Adrenal gland (tissue), 19 donors: ENCODE measurements at regions of chr22 and their contacts with region 1.

Region 1: GRCh38 chr22:29216873-29217666 is 11.4 kb downstream of the EMID1 start:
- DNase-seq: peak; percentile 74 to 97 (median 95)
- H3K4me3 ChIP-seq: no peak overlapping the region
- H3K27ac ChIP-seq: peak overlapping the region; percentile 33 to 90 (median 66)
- H3K4me1 ChIP-seq: peaks cover 13 to 22% of the 10 kb centered on the region in 2 donors
- H3K27me3 ChIP-seq: no peaks in the 10 kb centered on the region
- CTCF ChIP-seq: peak in 1 of 6 experiments; percentile 11
- POLR2A ChIP-seq: no peak

Region 2: DNA sequence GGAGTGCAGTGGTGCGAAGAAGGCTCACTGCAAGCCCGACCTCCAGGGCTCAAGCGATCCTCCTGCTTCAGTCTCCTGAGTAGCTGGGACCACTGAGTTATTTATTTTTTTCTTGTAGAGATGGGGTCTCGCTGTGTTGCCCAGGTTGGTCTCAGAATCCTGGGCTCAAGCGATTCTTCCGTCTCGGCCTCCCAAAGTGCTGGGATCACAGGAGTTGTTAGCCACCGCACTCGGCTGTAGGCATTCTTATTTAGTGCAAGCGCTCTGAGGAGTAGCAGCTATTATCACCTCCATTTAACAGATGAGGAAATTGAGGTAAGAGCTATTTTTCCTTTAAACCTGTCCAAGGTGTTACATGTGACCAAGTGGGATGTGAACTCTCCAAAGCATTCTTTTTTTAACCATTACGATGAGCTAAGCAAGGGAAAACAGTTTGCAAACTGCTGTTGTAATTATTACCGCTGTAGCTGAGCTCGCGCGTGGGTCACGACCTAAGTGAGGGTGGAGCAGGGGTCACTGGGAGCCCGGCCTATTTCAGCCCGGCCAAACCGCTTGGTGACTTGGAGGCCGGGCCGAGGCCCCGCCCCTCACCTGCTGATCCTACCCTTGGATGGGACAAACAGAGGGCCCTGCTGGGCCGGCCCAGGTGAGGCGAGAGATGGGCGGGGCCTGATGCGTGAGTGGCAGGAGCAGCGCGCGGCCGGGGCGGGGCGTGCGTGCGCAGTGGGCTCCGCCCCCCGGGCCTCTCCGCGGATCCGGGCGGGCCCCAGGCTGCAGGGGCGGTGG is 144.7 kb before region 1 on chr22:
- intact Hi-C with region 1: no loop called
- DNase-seq: peak; percentile 75 to 90 (median 88)
- H3K4me3 ChIP-seq: peak overlapping the region in 1 of 4 donors; percentile 76
- H3K27ac ChIP-seq: peak overlapping the region in 1 of 5 donors; percentile 67
- H3K4me1 ChIP-seq: peaks cover 9 to 42% of the 10 kb centered on the region in 2 donors
- H3K27me3 ChIP-seq: no peaks in the 10 kb centered on the region
- CTCF ChIP-seq: no peak
- POLR2A ChIP-seq: no peak

Region 3: DNA sequence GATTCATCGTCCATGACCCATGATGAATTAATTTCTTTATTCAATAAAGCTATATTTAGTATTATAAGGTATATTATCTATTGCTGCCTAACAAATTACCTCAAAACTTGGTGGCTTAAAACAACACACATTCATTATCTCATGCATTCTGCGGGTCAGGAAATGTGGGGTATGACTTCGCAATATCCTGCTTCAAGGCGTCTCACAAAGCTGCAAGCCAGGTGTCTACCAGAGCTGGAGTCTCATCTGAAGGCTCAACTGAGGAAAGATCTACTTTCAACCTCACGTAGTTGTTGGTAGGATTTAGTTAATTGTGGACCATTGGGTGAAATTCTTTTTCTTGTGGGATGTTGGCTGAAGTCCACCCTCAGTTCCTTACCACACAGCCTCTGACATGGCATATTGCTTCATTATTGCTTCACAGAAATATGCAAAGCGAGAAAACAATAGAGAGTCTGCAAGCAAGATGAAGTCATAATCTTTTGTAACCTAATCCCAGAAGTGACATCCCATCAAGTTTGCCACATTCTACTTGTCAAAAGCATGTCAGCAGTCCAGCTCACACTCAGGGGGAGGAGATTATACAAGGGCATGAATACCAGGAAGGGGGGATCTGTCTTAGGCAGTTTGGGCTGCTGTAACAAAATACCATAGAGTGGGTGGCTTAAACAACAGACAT is 99.1 kb before region 1 on chr22:
- intact Hi-C with region 1: no loop called
- DNase-seq: no peak
- H3K4me3 ChIP-seq: no peak overlapping the region
- H3K27ac ChIP-seq: no peak overlapping the region
- H3K4me1 ChIP-seq: peaks cover 0 to 8% of the 10 kb centered on the region in 2 donors
- H3K27me3 ChIP-seq: no peaks in the 10 kb centered on the region
- CTCF ChIP-seq: no peak
- POLR2A ChIP-seq: no peak

Region 4: GRCh38 chr22:29260601-29261315 is 43.7 kb after region 1 on chr22:
- intact Hi-C with region 1: loop called in 1 of 2 experiments (anchors 5 kb)
- DNase-seq: peak in 3 of 7 donors; percentile 31 to 42 (median 36)
- H3K4me3 ChIP-seq: no peak overlapping the region
- H3K27ac ChIP-seq: peak overlapping the region in 1 of 5 donors; percentile 2
- H3K4me1 ChIP-seq: peaks cover 2 to 3% of the 10 kb centered on the region in 2 donors
- H3K27me3 ChIP-seq: no peaks in the 10 kb centered on the region
- CTCF ChIP-seq: no peak
- POLR2A ChIP-seq: no peak